Ascending aorta (tissue), 2 donors: ENCODE measurements at regions of chr1 and their contacts with region 1.

Region 1: DNA sequence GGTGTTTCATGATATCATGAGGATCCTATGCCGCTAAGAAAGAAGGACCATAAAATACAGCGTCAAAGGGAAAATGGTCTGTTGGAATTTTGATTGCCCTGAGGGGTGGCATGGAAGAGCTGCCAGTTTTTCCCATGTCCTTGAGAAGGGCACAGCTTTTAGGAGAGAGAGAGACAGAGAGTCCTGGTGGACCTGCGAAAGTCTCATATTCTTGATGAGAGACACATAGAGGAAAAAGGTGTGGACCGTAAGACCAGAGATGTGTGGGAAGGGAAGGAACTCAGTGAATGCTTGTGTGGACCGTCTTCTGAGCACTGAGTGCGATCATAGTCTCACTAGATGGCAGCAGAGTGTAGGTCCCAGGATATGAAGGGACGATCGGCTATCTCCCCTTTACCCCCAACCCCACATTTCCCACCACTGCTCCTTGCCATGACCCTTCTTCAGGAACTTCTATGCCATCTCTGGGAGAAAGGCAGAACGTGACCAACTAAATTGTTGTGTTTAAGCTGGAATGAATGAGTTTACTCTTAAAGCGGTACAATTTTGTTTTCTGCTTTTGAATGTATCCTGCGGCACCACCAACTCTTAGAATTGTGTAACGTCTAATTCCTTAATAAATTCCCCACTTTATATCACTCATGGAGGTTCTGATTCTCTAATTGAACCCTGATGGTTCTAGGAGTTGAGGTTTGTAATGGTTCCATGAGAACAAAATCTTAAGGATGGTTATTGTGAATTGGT is 117.7 kb downstream of the CTH start:
- DNase-seq: no peak
- H3K4me3 ChIP-seq: no peak overlapping the region
- H3K27ac ChIP-seq: no peak overlapping the region
- H3K4me1 ChIP-seq: no peaks in the 10 kb centered on the region
- H3K27me3 ChIP-seq: no peaks in the 10 kb centered on the region
- CTCF ChIP-seq: peak in 2 of 3 experiments; percentile 51 to 73

Region 2: DNA sequence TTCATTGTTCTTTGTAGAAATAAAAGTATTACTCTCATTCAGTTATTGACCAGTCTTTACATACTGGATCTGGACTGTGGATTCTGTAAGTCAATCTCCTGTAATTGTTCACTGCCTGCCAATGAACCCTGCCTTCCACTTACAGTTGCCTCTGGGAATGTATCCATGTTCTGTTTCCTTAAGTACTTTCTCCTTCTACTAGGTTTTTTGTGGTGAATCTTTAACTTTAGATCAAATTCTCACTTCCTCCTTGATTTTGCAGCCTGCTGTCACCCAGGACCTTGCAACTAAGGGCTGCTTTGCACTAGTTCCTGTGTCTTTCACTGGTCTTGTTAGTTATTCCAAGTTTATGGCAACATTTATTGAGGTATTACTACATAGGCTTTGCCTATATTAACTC is 146.1 kb before region 1 on chr1:
- intact Hi-C with region 1: no loop called
- DNase-seq: no peak
- H3K4me3 ChIP-seq: no peak overlapping the region
- H3K27ac ChIP-seq: no peak overlapping the region
- H3K4me1 ChIP-seq: no peaks in the 10 kb centered on the region
- H3K27me3 ChIP-seq: no peaks in the 10 kb centered on the region
- CTCF ChIP-seq: no peak

Region 3: DNA sequence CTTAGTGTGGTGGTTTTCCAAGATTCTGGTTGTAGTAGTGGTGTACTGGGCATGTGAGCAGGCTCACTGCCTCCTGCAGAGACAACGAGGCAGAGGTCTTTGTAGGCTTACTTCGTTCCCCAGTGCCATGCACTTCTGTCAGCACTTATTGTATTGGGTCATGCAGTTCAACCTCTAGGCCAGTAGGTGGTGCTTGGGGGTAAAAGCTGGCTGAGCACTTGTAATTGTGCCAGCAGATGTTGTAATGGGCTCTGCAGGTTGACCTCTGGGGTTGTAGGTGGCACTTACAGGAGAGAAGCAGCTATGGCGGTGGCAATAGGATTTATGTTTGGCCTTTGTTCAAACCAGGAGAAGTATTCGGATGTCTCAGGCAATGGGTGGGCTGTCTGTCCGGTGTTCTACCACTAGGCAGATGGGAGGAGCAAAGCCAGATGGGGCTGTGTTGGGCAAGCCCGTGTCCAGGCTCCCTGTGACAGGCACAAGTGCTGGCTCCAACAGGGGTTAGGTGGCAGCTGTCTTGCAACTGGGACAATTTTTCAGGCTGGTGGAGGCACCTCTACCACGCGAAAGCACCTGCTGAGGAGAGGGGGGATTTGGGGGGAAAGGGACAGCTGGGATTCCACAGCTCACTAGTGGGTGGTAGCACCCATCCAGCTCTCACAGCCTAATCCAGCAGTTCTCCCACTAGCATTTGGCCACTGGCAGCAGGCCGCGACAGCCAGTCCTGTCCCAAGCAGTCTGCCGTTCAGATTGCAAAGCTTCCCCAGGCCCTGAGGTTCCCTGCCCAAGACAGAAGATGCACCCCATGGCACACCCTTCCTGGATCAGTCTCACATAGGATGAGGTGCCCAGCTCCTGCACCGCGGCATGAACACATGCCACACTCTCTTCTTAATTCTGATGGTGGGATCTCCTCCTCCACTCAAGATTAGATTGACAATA is 156.8 kb after region 1 on chr1:
- intact Hi-C with region 1: loop called (anchors 10 kb)
- DNase-seq: peak in 1 of 2 donors; percentile 77
- H3K4me3 ChIP-seq: no peak overlapping the region
- H3K27ac ChIP-seq: no peak overlapping the region
- H3K4me1 ChIP-seq: no peaks in the 10 kb centered on the region
- H3K27me3 ChIP-seq: no peaks in the 10 kb centered on the region
- CTCF ChIP-seq: peak; percentile 85 to 92 (median 88)

Region 4: DNA sequence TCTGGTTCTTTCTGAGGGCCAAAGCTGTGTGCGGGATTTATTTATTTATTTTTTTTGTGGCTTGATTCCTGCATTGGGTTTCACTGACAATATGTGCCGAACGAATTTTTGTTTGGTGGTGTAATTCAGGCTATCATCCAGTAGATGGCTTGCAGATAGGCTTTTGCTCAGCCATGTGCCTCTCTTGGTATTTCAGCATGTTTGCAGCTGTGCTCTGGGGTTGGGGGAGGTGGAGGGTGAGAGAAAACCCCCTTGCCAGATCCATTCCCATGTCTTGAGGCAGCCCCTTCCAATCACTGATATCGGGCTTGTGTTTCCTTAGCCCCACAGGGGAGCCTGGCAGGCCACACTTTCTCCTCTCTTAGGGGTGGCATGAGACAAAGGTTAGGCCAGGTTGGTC is 216.4 kb after region 1 on chr1:
- intact Hi-C with region 1: no loop called
- DNase-seq: no peak
- H3K4me3 ChIP-seq: no peak overlapping the region
- H3K27ac ChIP-seq: no peak overlapping the region
- H3K4me1 ChIP-seq: no peaks in the 10 kb centered on the region
- H3K27me3 ChIP-seq: no peaks in the 10 kb centered on the region
- CTCF ChIP-seq: no peak